Activated naive CD4-positive, alpha-beta T cell treated with anti-CD3 and anti-CD28 coated beads, Interleukin-2, amount 10 ng/mL, durations not matched to agents 7 days and 5 days (primary cell): ENCODE measurements at regions of chr15 and their contacts with region 1.

Region 1: GRCh38 chr15:77543159-77543882 is 89.4 kb downstream of the LINGO1 start:
- DNase-seq: peak; percentile 83
- H3K4me3 Mint-ChIP-seq: peak overlapping the region; percentile 69
- H3K27ac Mint-ChIP-seq: no peak overlapping the region
- H3K4me1 Mint-ChIP-seq: peaks cover 13% of the 10 kb centered on the region
- H3K27me3 Mint-ChIP-seq: peaks cover 30% of the 10 kb centered on the region

Region 2: DNA sequence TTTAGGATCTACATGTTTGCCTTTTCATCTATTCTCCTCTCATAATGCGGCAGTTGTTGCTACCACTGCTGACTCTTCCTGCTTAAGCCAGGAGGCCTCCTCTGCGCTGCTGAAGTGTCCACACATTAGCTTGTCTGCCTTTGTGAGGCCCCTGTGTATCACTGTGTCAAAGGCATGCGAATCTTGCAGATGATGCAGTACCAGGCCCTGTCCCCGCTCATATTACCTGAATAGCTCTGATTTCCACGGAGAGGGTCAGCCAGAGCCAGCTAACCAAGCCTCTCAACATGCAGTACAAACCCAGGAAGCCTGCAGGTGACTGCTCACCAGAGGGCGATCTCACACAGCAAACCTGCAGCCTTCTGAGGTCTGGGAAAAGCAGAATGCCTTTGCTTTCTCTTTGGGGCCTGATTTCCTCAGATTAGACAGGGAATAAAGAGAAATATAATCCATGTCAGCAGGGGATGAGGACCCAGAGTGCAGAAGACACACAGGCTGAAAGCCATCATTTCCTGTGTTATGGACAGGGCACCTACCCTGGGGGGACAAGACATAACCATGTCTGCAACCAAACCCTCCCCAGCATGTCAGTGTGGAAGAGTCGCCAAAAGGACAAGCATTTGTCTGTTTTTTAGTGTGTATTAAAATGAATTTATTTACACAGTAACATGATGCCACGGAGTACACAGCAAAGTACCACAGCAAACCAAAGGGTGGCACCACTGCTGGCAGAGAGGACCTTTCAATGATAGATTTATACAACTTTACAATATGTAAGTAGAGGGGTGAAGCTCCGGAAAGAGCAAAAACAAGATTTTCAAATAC is 435.6 kb before region 1 on chr15:
- CTCF ChIA-PET with region 1: interaction called, 61 read pairs
- DNase-seq: peak; percentile 65
- H3K4me3 Mint-ChIP-seq: no peak overlapping the region
- H3K27ac Mint-ChIP-seq: no peak overlapping the region
- H3K4me1 Mint-ChIP-seq: no peaks in the 10 kb centered on the region
- H3K27me3 Mint-ChIP-seq: peaks cover 5% of the 10 kb centered on the region

Region 3: DNA sequence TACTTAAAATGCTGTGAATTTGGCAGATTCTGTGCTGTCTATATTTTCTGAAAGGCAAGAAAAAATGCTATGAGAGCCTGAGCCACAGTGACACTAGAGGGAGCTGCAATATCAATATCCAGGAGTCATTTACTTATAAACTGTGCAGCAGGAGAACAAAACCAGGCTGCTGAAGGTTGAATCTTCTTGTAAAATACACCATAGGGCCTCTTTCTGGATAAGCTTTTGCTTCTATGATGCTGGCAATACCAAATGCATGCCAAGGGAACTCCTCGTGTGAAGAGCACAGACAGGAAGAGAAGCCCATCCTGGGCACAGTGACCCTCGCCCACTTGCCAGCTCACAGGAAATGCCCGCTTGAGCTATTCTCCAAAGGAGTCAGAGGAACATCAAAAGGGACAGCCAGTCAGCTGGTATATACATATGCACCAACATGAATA is 424.4 kb before region 1 on chr15:
- CTCF ChIA-PET with region 1: interaction called, 33 read pairs
- DNase-seq: peak; percentile 59
- H3K4me3 Mint-ChIP-seq: no peak overlapping the region
- H3K27ac Mint-ChIP-seq: no peak overlapping the region
- H3K4me1 Mint-ChIP-seq: peaks cover 6% of the 10 kb centered on the region
- H3K27me3 Mint-ChIP-seq: no peaks in the 10 kb centered on the region

Region 4: GRCh38 chr15:77179541-77179998 is 363.8 kb before region 1 on chr15:
- CTCF ChIA-PET with region 1: interaction called, 57 read pairs
- DNase-seq: peak; percentile 38
- H3K4me3 Mint-ChIP-seq: no peak overlapping the region
- H3K27ac Mint-ChIP-seq: peak overlapping the region; percentile 89
- H3K4me1 Mint-ChIP-seq: peaks cover 53% of the 10 kb centered on the region
- H3K27me3 Mint-ChIP-seq: no peaks in the 10 kb centered on the region

Region 5: GRCh38 chr15:77186594-77187011 is 356.7 kb before region 1 on chr15:
- CTCF ChIA-PET with region 1: interaction called, 57 read pairs
- DNase-seq: peak; percentile 29
- H3K4me3 Mint-ChIP-seq: no peak overlapping the region
- H3K27ac Mint-ChIP-seq: no peak overlapping the region
- H3K4me1 Mint-ChIP-seq: peaks cover 46% of the 10 kb centered on the region
- H3K27me3 Mint-ChIP-seq: no peaks in the 10 kb centered on the region

Region 6: GRCh38 chr15:77496710-77497103 is 46.6 kb before region 1 on chr15:
- CTCF ChIA-PET with region 1: interaction called, 10 read pairs
- DNase-seq: peak; percentile 81
- H3K4me3 Mint-ChIP-seq: no peak overlapping the region
- H3K27ac Mint-ChIP-seq: no peak overlapping the region
- H3K4me1 Mint-ChIP-seq: peaks cover 9% of the 10 kb centered on the region
- H3K27me3 Mint-ChIP-seq: no peaks in the 10 kb centered on the region

Region 7: DNA sequence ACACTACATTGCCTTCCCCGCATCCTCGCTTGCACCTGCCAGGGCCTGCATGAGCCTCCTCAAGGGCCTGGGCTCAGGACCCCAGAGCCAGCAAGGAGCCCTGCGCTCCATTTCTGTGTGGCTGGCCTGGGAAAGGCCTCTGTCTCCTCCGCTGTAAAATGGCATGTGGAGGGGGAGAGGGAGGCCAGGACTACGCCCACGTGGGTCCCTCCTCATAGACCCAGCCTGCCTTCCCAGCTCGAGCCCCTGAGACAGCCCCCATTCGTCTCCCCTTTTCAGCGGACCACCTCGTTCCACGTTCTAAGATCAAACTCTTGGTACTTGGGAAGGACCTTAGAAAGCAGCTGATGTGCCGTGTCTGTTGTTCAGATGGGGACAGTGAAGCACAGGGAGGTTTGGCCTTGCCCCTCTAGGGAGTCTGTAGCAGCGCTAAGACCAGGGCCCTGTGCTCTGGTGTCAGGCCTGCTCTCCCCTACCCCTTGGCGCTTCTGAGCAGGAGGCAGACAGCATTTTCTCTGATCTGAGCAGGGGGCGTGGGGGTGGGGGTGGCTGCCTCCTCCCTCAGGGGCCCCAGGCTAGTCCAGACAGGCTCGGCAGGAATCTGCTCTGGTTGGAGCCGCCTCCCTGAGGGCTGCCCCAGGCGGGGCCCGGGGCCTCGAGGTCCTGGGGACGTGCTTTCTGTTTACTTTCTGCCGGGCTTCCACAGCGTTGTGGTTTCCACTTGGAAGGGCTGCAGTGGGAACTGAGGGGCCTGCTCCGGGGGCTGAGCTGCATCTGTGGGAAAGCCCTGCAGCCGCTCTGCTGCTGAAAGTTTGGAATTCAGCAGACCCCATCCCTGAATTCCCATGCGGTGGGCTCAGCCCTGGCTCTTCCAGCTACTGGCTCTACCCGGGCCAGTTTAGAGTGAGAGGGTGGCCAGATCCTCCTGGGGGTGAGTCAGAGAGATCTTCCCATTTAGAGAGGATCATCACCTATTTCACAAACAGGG is 16.2 kb before region 1 on chr15:
- CTCF ChIA-PET with region 1: interaction called, 12 read pairs
- DNase-seq: no peak
- H3K4me3 Mint-ChIP-seq: no peak overlapping the region
- H3K27ac Mint-ChIP-seq: no peak overlapping the region
- H3K4me1 Mint-ChIP-seq: no peaks in the 10 kb centered on the region
- H3K27me3 Mint-ChIP-seq: peaks cover 15% of the 10 kb centered on the region